MCF 10A (cell line): ENCODE measurements at regions of chr4 and their contacts with region 1.

Region 1: DNA sequence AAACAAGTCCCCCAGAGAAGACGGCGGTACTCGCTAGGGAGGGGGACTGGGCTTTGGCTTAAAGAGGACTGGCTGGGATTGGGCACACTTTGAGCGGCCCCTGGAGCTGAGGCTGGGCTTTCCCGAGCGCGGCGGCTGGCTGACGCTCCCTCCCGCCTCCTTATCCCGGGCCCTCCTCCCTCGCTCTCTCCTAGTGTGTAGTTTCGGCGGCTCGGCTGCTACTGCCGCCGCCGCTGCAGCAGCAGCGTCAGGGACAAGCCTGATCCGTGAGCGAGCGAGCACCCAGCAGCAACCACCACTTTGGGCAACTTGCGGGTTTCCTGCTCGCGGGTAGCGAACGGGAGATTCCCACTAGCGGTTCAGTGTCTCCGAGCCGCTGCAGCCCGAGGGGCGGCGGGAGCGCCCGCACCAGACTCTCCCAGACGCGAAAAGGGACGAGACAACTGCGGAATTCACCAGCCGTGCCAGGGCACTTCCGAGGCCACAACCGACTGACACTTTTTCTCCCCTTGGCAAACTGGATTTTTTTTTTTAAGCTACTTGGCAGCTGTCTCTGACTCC is 629 bp upstream of the PCDH7 start:
- DNase-seq: peak; percentile 83
- H3K4me3 Mint-ChIP-seq: peak overlapping the region; percentile 75
- H3K27ac Mint-ChIP-seq: peak overlapping the region; percentile 1
- H3K4me1 Mint-ChIP-seq: peaks cover 20% of the 10 kb centered on the region
- H3K27me3 Mint-ChIP-seq: no peaks in the 10 kb centered on the region
- CTCF ChIP-seq: no peak

Region 2: GRCh38 chr4:31692402-31692940 is 972.9 kb after region 1 on chr4:
- CTCF ChIA-PET with region 1: no interaction called
- POLR2A ChIA-PET with region 1: no interaction called
- intact Hi-C with region 1: loop called (anchors 1 kb)
- DNase-seq: peak; percentile 34
- H3K4me3 Mint-ChIP-seq: no peak overlapping the region
- H3K27ac Mint-ChIP-seq: peak overlapping the region; percentile 3
- H3K4me1 Mint-ChIP-seq: no peaks in the 10 kb centered on the region
- H3K27me3 Mint-ChIP-seq: no peaks in the 10 kb centered on the region
- CTCF ChIP-seq: peak; percentile 59